Tibial artery (tissue), 4 donors: ENCODE measurements at regions of chr17 and their contacts with region 1.

Region 1: DNA sequence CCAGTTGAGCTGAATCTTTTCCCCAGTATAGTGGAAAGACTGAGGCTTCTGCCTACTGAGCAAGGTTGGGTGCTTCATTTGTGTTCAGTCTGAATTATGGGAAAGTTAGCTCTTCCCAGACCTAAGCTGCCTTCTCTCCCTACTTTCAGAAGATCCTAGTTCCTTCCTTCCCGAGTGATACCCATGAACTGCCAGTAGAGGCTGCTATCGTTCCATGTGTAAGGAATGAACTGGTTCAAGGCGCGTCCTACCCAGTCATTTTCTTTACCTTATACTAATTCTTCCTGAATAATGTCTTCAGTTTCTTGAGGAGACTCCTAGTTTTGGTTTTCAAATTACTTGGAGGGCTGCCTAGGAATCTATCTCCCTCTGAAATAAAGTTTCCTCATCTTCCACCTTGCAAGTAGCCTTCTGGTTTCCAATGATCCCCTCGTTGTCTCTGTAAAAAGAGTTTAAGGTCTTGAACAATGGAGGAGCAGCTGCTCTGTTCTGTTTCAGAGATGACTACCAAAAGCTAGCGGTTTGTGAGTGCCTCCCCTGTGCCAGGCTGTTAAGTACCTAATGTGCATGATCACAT is 934 bp upstream of the AOC2 start:
- DNase-seq: peak in 1 of 2 donors; percentile 47
- H3K4me3 ChIP-seq: no peak overlapping the region
- H3K27ac ChIP-seq: peak overlapping the region; percentile 34 to 36
- H3K4me1 ChIP-seq: peaks cover 0 to 17% (median 7%) of the 10 kb centered on the region in 4 donors
- H3K27me3 ChIP-seq: no peaks in the 10 kb centered on the region
- CTCF ChIP-seq: peak; percentile 96 to 97

Region 2: GRCh38 chr17:42629411-42630009 is 213.9 kb before region 1 on chr17:
- intact Hi-C with region 1: no loop called
- DNase-seq: no peak
- H3K4me3 ChIP-seq: no peak overlapping the region
- H3K27ac ChIP-seq: no peak overlapping the region
- H3K4me1 ChIP-seq: no peaks in the 10 kb centered on the region
- H3K27me3 ChIP-seq: no peaks in the 10 kb centered on the region
- CTCF ChIP-seq: no peak

Region 3: DNA sequence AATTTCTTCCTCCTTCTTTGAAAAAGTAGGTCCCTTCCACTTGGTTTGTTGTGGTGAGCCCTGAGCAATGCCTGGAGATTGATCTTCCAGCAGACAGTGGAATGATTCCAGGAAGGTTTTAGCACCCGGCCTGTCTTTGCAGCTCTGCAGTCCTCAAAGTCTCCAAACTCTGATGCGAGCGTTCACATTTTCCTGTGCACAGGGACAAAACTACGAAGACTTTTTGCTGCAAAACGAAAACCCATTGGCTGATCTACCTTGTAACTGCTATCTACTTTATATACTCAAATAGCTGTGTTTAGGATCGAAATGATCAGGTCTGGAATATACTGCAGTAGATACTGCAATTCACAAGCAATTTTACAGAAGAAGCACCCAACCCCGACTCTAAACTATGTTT is 78.8 kb after region 1 on chr17:
- intact Hi-C with region 1: loop called (anchors 2 kb)
- DNase-seq: no peak
- H3K4me3 ChIP-seq: peak overlapping the region in 1 of 2 donors; percentile 13
- H3K27ac ChIP-seq: peak overlapping the region; percentile 58 to 74
- H3K4me1 ChIP-seq: peaks cover 0 to 50% (median 24%) of the 10 kb centered on the region in 4 donors
- H3K27me3 ChIP-seq: no peaks in the 10 kb centered on the region
- CTCF ChIP-seq: no peak

Region 4: GRCh38 chr17:42928714-42929496 is 85.5 kb after region 1 on chr17:
- intact Hi-C with region 1: loop called (anchors 2 kb)
- DNase-seq: peak; percentile 61 to 78
- H3K4me3 ChIP-seq: no peak overlapping the region
- H3K27ac ChIP-seq: peak overlapping the region; percentile 75 to 82
- H3K4me1 ChIP-seq: peaks cover 0 to 13% (median 1%) of the 10 kb centered on the region in 4 donors
- H3K27me3 ChIP-seq: peaks cover 0 to 2% of the 10 kb centered on the region in 2 donors
- CTCF ChIP-seq: peak; percentile 75 to 86

Region 5: DNA sequence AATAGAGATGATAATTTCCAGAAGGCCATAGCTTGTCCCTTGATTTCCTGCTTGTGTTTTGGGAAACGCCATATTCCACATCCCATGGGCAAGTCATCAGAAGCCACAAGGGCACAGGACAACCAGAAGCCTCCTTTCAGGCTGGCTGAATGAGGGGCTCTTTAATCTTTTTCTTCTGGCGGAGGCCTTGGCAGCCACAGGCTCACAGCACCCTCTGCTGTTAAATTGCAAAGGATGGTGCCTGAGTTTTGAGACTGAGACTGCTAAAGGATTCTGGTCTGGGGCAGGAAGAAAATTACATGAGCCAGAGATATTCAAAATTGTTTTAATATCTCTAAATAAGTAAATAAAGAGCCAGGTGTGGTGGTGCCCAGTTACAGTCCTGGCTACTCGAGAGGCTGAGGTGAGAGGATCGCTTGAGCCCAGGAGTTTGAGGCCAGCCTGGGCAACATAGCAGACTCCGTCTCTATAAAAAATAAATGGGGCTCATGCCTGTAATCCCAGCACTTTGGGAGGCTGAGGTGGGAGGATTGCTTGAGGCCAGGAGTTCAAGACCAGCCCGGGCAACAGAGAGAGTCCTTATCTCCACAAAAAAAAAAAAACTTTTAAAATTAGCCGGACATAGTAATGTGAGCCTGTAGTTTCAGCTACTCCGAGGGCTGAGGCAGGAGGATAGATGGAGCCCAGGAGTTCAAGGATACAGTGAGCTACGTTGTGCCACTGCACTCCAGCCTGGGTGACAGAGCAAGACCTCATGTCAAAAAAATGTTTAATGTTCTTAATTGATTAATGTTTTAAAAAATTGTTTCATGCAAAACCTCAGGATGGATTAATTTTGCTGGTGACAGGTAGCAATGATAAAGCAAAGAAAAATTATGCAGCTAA is 94.5 kb after region 1 on chr17:
- intact Hi-C with region 1: loop called (anchors 2 kb)
- DNase-seq: no peak
- H3K4me3 ChIP-seq: no peak overlapping the region
- H3K27ac ChIP-seq: no peak overlapping the region
- H3K4me1 ChIP-seq: no peaks in the 10 kb centered on the region
- H3K27me3 ChIP-seq: peaks cover 0 to 2% of the 10 kb centered on the region in 2 donors
- CTCF ChIP-seq: peak; percentile 58 to 67

Region 6: GRCh38 chr17:42997984-42998938 is 154.8 kb after region 1 on chr17 and contains the start of gene RPL27:
- intact Hi-C with region 1: loop called (anchors 5 kb)
- DNase-seq: peak; percentile 99 to 100
- H3K4me3 ChIP-seq: peak within 1 kb of the TSS; percentile 57 to 74
- H3K27ac ChIP-seq: peak within 1 kb of the TSS; percentile 83 to 85
- H3K4me1 ChIP-seq: peaks cover 0 to 20% (median 17%) of the 10 kb centered on the region in 4 donors
- H3K27me3 ChIP-seq: no peaks in the 10 kb centered on the region
- CTCF ChIP-seq: peak; percentile 90 to 94